ENCODE measurements at regions of chr2 and their contacts with region 1.

Region 1: GRCh38 chr2:135820003-135820618 is 16.9 kb downstream of the LCT start:
- DNase-seq: peak; percentile 94
- H3K4me3 Mint-ChIP-seq: peak overlapping the region; percentile 64
- H3K27ac Mint-ChIP-seq: peak overlapping the region; percentile 79
- H3K4me1 Mint-ChIP-seq: peaks cover 48% of the 10 kb centered on the region
- H3K27me3 Mint-ChIP-seq: no peaks in the 10 kb centered on the region

Region 2: GRCh38 chr2:135741395-135742324 is 78.5 kb before region 1 on chr2 and contains the start of gene UBXN4:
- CTCF ChIA-PET with region 1: no interaction called
- intact Hi-C with region 1: loop called (anchors 1 kb)
- DNase-seq: peak; percentile 98
- H3K4me3 Mint-ChIP-seq: peak within 1 kb of the TSS; percentile 98
- H3K27ac Mint-ChIP-seq: peak within 1 kb of the TSS; percentile 99
- H3K4me1 Mint-ChIP-seq: peaks cover 30% of the 10 kb centered on the region
- H3K27me3 Mint-ChIP-seq: no peaks in the 10 kb centered on the region
- total RNA-seq, gene UBXN4: 100 to 105 TPM

Region 3: DNA sequence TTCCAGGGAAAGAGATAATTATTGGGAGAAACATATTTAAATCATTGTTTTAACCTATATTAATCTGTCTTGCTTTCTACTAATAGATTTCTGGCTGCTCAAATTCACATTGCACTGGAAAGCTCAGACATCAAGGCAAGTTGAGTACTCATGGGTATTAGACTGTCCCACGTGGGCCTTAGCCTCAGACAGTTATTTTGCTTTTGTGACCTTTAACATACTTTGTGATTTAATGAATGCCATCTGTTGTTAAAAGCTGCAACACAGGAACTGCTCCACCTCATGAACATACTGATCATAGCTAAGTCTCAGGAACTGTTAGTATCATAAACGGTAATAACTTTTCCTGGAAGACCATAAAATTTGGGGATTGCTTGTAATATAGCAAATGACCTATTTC is 19.6 kb after region 1 on chr2:
- CTCF ChIA-PET with region 1: interaction called, 3 read pairs
- intact Hi-C with region 1: loop called (anchors 2 kb)
- DNase-seq: no peak
- H3K4me3 Mint-ChIP-seq: no peak overlapping the region
- H3K27ac Mint-ChIP-seq: no peak overlapping the region
- H3K4me1 Mint-ChIP-seq: peaks cover 17% of the 10 kb centered on the region
- H3K27me3 Mint-ChIP-seq: no peaks in the 10 kb centered on the region

Region 4: DNA sequence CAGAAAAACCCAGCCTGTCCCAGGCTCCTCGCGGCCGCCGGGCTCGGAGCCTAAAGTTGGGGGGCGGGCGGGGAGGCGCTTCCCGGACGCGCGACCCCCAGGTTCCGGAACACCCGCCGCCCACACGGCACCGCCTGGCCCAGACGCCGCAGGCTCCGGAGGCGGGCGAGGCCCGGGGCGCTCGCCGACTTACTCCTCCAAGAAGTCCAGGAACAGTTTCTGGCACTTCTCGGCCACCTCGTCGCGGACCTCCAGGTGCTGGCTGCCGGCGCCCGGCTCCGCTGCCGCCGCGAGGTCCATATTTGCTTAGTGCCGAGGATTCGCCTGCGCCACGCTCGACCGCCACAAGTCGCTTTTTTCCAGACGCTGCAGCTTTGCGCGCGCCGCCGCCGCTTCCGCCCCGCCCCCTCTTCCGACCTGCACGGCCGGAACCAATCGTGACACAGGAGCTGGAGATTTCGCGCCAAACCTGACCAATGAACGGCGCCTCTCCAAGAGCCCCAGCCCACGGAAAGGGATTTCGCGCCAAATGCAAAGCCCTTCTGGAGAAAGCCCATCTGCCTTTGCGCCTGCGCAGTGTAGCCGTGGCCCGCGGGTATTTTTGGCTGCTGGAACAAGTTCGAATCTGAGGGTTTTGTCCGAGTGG is 56.1 kb after region 1 on chr2 and contains the start of gene MCM6:
- CTCF ChIA-PET with region 1: no interaction called
- intact Hi-C with region 1: loop called (anchors 1 kb)
- DNase-seq: peak; percentile 100
- H3K4me3 Mint-ChIP-seq: peak within 1 kb of the TSS; percentile 91
- H3K27ac Mint-ChIP-seq: peak within 1 kb of the TSS; percentile 99
- H3K4me1 Mint-ChIP-seq: peaks cover 39% of the 10 kb centered on the region
- H3K27me3 Mint-ChIP-seq: no peaks in the 10 kb centered on the region
- total RNA-seq, gene MCM6: 221 to 226 TPM

Region 5: GRCh38 chr2:136059036-136059472 is 238.9 kb after region 1 on chr2:
- CTCF ChIA-PET with region 1: no interaction called
- intact Hi-C with region 1: loop called (anchors 1 kb)
- DNase-seq: no peak
- H3K4me3 Mint-ChIP-seq: no peak overlapping the region
- H3K27ac Mint-ChIP-seq: no peak overlapping the region
- H3K4me1 Mint-ChIP-seq: peaks cover 59% of the 10 kb centered on the region
- H3K27me3 Mint-ChIP-seq: no peaks in the 10 kb centered on the region

Region 6: DNA sequence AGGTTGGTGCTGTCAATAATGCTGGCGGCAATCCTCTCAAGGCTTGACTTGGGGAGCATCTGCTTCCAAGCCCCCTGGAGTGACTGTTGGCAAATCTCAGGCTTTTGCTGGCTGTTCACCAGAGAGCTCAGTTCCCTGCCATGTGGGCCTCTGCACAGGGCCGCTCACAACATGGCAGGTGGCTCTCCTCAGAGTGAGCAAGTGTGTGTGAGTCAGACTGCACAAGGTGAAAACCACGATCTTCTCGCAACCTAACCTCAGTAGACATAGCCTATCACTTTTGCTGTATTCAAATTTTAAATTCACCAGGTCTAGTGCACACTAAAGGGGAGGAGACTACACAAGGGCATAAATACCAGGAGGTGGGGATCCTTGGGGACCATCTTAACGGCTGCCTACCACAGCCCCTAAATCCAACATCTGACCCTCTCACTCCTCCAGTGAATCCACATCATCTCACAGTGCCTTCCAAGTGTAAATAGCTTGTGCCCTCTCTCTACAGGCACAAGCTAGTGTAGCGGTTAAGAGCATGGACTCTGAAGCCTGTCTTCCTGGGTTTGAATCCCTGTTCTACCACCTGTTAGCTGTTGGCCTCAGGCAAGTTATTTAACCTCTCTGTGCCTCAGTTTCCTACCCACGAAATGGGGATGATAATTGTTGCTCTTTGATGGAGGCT is 485.5 kb after region 1 on chr2:
- CTCF ChIA-PET with region 1: no interaction called
- intact Hi-C with region 1: loop called (anchors 5 kb)
- DNase-seq: peak; percentile 85
- H3K4me3 Mint-ChIP-seq: no peak overlapping the region
- H3K27ac Mint-ChIP-seq: peak overlapping the region; percentile 81
- H3K4me1 Mint-ChIP-seq: peaks cover 21% of the 10 kb centered on the region
- H3K27me3 Mint-ChIP-seq: no peaks in the 10 kb centered on the region